ENCODE measurements at regions of chr17 and their contacts with region 1.

Region 1: GRCh38 chr17:32335687-32336086 is 6.3 kb downstream of the C17orf75 start:
- DNase-seq: peak; percentile 61
- H3K4me3 ChIP-seq: no peak overlapping the region
- H3K27ac ChIP-seq: no peak overlapping the region
- H3K27me3 ChIP-seq: no peaks in the 10 kb centered on the region
- CTCF ChIP-seq: no peak

Region 2: DNA sequence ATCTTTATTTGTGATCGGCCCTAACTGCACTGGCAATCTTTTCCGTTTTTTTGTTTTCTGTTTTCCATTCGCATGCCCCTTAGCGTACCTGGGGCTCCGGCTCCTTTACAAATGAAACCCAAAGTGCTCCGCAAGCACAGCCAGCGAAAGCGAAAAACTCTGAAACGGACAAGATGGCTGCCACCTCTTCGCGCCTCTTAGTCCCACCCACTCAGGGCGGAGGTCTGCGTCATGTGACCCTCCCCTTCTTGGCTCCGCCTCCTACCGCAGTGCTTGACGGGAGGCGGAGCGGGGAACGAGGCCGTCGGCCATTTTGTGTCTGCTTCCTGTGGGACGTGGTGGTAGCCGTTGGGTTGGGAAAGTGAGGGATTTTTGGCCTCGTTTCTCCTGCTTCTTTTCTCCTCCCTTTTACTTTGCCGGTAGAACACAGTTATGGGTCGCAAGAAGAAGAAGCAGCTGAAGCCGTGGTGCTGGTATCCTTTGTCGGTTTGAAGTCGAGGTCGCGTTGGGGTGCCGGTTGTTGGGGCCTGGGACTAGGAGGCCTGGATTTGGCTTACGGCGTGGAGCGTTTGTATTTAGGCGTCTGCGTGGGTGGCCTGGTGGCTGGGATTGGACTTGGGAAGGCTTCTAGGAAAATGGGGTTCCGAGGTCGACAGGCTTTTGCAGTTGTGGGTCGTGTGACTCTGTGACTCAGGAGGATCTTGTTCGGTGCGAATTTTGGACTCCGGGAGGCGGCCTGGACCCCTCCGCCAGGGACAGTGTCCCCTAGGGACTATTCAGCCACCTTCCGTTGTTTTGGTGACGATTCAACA is 14.4 kb after region 1 on chr17 and contains the start of gene ZNF207:
- CTCF ChIA-PET with region 1: no interaction called
- POLR2A ChIA-PET with region 1: interaction called, 10 read pairs
- DNase-seq: peak; percentile 92
- H3K4me3 ChIP-seq: peak within 1 kb of the TSS; percentile 100
- H3K27ac ChIP-seq: peak within 1 kb of the TSS; percentile 98
- H3K27me3 ChIP-seq: no peaks in the 10 kb centered on the region
- CTCF ChIP-seq: no peak
- polyA plus RNA-seq, gene ZNF207: 219 and 239 TPM in 2 replicates

Region 3: DNA sequence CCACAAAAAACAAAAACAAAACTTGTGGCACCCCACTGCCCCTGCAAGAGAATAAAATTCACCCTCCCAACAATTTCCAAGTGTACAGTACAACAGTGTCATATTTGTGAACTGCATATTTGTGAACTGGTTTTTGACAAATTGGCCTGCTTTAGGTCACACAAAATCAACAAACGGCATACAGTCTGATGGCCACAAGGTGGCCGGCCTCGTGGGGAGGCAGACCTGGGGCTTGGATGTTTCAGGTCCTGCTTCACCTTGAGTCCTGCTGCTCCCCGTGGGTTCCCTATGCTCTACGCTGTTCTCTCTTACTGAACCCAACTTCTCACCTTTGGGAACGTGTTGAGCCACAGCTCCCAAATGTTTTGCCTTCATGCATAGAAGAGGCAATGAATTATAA is 253.3 kb after region 1 on chr17:
- CTCF ChIA-PET with region 1: no interaction called
- POLR2A ChIA-PET with region 1: no interaction called
- DNase-seq: no peak
- H3K4me3 ChIP-seq: no peak overlapping the region
- H3K27ac ChIP-seq: no peak overlapping the region
- H3K27me3 ChIP-seq: no peaks in the 10 kb centered on the region
- CTCF ChIP-seq: peak; percentile 16; the same call in 1 of the 2 replicates

Measured in AG04450 (cell line).